ENCODE measurements at regions of chr17 and their contacts with region 1.

Region 1: GRCh38 chr17:8173056-8173870 is 2.9 kb downstream of the TMEM107 start:
- DNase-seq: peak; percentile 84
- H3K4me3 Mint-ChIP-seq: peak overlapping the region; percentile 76
- H3K27ac Mint-ChIP-seq: peak overlapping the region; percentile 95
- H3K4me1 Mint-ChIP-seq: peaks cover 57% of the 10 kb centered on the region
- H3K27me3 Mint-ChIP-seq: no peaks in the 10 kb centered on the region

Region 2: DNA sequence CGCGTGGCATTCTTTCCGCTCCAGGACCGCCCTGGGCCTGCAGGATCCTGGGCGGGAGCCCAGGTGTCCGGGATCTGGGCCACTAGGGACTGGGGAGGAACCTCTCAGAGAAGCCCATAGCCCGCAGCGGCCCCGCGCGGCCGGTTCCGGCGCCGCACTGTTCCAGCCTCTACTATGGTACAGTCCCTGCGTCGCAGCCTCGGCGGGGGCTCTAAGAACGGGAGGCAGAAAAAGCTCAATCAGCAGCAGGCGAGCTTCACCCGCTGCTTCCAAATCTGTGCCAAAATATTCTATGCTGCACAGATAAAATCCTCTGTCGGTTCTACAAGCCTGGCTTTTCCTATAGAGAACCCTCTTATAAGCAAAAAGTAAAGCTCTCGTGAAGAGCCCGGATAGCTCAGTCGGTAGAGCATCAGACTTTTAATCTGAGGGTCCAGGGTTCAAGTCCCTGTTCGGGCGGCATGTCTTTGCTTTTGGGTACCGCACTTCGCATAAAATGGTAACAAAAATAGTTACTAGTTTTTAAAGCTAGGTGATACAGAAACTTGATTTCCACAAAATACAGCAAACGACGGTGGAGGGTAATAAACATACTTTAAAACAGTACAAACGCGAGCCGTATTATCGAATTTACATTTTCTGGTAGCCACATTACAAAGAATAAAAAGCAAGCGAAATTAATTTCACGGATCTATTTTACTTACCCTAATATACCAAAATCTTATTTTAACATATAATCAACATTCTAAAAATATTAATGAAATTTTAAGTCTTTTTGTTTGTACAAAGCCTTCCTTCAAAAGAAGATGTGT is 54.3 kb before region 1 on chr17:
- CTCF ChIA-PET with region 1: interaction called, 3 read pairs
- POLR2A ChIA-PET with region 1: interaction called, 49 read pairs
- DNase-seq: peak; percentile 86
- H3K4me3 Mint-ChIP-seq: peak overlapping the region; percentile 80
- H3K27ac Mint-ChIP-seq: peak overlapping the region; percentile 89
- H3K4me1 Mint-ChIP-seq: peaks cover 56% of the 10 kb centered on the region
- H3K27me3 Mint-ChIP-seq: peaks cover 60% of the 10 kb centered on the region

Region 3: DNA sequence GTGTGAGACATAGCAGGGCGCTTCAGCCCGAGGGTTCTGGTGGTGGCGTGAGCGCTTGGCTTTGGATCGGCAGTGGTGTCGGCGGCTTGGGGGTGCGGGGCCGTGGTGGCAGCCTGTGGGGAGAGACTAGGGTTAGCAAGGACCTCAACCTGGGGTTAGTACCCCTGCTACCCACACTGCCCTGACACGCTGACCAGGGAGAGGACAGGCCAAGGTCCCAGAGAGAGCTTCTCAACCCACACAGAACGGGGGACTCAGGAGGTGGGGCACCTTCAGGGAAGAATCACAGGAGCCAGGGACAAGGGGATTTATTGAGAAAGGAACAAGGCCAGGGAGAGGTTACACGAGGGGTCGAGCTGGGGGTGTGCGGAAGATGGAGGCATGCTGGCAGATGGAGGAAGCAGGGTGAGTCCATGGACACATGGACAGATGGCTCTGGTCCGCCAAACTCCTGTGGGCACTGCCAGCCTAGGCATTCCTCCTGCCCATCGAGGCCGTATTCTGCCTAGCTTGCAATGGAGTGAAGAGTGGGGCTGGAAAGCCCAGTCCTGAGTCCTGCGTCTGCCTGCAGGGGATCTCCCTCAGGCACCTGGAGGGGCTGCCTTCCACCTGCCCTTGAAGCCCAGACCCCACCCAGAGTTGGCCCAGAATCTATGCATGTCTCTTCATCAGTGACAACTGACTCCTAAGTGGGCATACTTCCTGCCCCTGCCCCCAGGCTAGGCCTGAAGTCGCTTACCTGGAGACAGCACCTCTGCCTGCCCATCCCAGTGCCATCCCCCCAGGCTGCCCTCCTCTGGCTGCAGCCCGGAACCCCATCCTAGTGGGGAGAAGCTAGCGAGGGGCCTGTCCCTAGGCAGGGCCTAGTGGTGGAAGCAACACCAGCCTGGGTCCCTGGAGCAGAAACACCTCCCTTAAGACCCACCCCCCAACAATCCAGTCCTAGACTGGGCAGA is 29.2 kb before region 1 on chr17:
- CTCF ChIA-PET with region 1: interaction called, 6 read pairs
- POLR2A ChIA-PET with region 1: interaction called, 653 read pairs
- DNase-seq: no peak
- H3K4me3 Mint-ChIP-seq: no peak overlapping the region
- H3K27ac Mint-ChIP-seq: no peak overlapping the region
- H3K4me1 Mint-ChIP-seq: no peaks in the 10 kb centered on the region
- H3K27me3 Mint-ChIP-seq: no peaks in the 10 kb centered on the region

Region 4: GRCh38 chr17:8204761-8205555 is 31.7 kb after region 1 on chr17:
- CTCF ChIA-PET with region 1: no interaction called
- POLR2A ChIA-PET with region 1: interaction called, 66 read pairs
- DNase-seq: no peak
- H3K4me3 Mint-ChIP-seq: no peak overlapping the region
- H3K27ac Mint-ChIP-seq: no peak overlapping the region
- H3K4me1 Mint-ChIP-seq: peaks cover 47% of the 10 kb centered on the region
- H3K27me3 Mint-ChIP-seq: no peaks in the 10 kb centered on the region

Region 5: DNA sequence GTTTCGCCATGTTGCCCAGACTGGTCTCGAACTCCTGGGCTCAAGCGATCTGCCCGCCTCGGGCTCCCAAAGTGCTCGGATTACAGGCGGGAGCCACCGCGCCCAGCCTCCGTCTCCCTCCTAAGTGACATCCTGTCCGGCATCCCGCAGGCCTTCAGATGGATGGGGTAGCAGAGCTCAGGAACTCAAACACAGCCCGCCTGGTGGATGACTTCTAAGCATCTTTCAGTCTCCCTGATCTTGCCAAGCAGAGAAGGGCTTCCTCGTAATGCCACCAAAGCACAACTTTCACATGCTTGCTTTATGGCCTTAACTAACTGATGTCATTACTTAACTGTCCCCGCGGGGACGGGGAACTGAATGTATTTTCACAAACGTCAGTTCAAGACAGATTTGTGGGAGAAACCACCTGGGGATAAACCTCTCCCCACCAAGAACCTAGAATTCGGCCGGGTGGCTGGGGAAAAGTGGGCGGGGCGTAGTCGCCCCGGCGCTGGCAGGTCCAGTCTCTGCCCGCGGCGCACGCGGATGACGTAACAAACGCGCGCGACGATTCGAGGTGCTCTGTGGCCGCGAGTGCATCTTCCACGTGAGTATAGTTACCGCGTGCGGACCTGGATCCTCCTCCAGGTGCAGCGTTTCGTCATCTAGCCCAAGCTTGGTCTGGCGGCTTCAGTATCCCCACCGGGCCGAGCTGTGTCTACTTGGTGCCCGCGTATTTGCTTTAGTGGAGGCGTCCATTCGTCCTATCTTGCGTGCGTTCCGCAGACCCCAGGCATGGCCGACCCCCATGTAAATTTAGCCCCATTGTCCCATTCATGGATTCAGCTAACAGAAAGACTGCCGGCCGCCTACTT is 75.7 kb after region 1 on chr17 and contains the start of gene PFAS:
- CTCF ChIA-PET with region 1: no interaction called
- POLR2A ChIA-PET with region 1: interaction called, 85 read pairs
- DNase-seq: peak; percentile 96
- H3K4me3 Mint-ChIP-seq: peak within 1 kb of the TSS; percentile 94
- H3K27ac Mint-ChIP-seq: peak within 1 kb of the TSS; percentile 100
- H3K4me1 Mint-ChIP-seq: peaks cover 50% of the 10 kb centered on the region
- H3K27me3 Mint-ChIP-seq: no peaks in the 10 kb centered on the region
- total RNA-seq, gene PFAS: 43.6 to 45.9 TPM

Region 6: DNA sequence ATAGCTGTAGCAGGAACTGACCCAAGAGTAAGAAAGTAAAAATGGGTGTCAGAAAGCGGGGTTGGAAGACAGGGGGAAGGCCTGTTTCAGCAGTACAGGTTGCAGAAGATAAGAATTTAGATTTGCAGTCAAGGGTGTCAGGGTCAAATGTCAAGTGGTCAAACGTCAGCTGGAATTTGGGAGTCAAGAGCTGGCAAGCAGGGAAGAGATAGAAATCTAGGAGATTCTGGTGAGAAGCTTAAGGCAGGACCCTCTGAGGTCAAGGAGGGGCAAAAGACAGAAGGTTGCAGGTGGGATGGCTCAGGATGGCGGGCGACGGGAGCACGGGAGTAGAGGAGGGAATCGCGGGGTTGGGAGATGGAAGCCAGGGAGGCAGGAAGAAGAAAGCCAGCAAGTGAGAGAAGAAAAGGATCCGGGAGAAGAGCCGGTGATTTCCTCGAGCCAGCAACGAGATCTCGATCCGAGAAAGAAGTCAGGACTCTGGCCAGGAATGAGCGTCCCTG is 121.6 kb after region 1 on chr17:
- CTCF ChIA-PET with region 1: no interaction called
- POLR2A ChIA-PET with region 1: interaction called, 31 read pairs
- DNase-seq: no peak
- H3K4me3 Mint-ChIP-seq: peak overlapping the region; percentile 89
- H3K27ac Mint-ChIP-seq: peak overlapping the region; percentile 83
- H3K4me1 Mint-ChIP-seq: peaks cover 53% of the 10 kb centered on the region
- H3K27me3 Mint-ChIP-seq: no peaks in the 10 kb centered on the region

Measured in activated CD4-positive, alpha-beta memory T cell treated with anti-CD3 and anti-CD28 coated beads, Interleukin-2, amount 10 ng/mL, durations not matched to agents 7 days and 5 days (primary cell).